HepG2 (cell line): ENCODE measurements at regions of chr6 and their contacts with region 1.

Region 1: GRCh38 chr6:100023798-100024197 is 29.8 kb upstream of the MCHR2 start:
- DNase-seq: no peak
- ATAC-seq: no peak
- H3K4me3 ChIP-seq: no peak overlapping the region
- H3K27ac ChIP-seq: no peak overlapping the region
- H3K4me1 ChIP-seq: no peaks in the 10 kb centered on the region
- H3K27me3 ChIP-seq: no peaks in the 10 kb centered on the region
- CTCF ChIP-seq: no peak
- EP300 ChIP-seq: no peak
- POLR2A ChIP-seq: no peak
- RAD21 ChIP-seq: no peak

Region 2: GRCh38 chr6:100001915-100002388 is 21.8 kb before region 1 on chr6:
- CTCF ChIA-PET with region 1: no interaction called
- POLR2A ChIA-PET with region 1: no interaction called
- in situ Hi-C with region 1: no loop called
- intact Hi-C with region 1: no loop called
- DNase-seq: peak; percentile 24
- ATAC-seq: peak; percentile 91
- H3K4me3 ChIP-seq: no peak overlapping the region
- H3K27ac ChIP-seq: no peak overlapping the region
- H3K4me1 ChIP-seq: no peaks in the 10 kb centered on the region
- H3K27me3 ChIP-seq: no peaks in the 10 kb centered on the region
- CTCF ChIP-seq: peak; percentile 81
- EP300 ChIP-seq: no peak
- POLR2A ChIP-seq: no peak
- RAD21 ChIP-seq: 0 out of 2 replicates have a peak, but pooled peaks have one; percentile 38

Region 3: GRCh38 chr6:100388868-100389519 is 365.2 kb after region 1 on chr6:
- CTCF ChIA-PET with region 1: no interaction called
- POLR2A ChIA-PET with region 1: no interaction called
- in situ Hi-C with region 1: no loop called
- intact Hi-C with region 1: loop called (anchors 5 kb)
- DNase-seq: no peak
- ATAC-seq: no peak
- H3K4me3 ChIP-seq: no peak overlapping the region
- H3K27ac ChIP-seq: no peak overlapping the region
- H3K4me1 ChIP-seq: no peaks in the 10 kb centered on the region
- H3K27me3 ChIP-seq: no peaks in the 10 kb centered on the region
- CTCF ChIP-seq: no peak
- EP300 ChIP-seq: no peak
- POLR2A ChIP-seq: no peak
- RAD21 ChIP-seq: no peak